PC-9 (cell line): ENCODE measurements at regions of chr15 and their contacts with region 1.

Region 1: DNA sequence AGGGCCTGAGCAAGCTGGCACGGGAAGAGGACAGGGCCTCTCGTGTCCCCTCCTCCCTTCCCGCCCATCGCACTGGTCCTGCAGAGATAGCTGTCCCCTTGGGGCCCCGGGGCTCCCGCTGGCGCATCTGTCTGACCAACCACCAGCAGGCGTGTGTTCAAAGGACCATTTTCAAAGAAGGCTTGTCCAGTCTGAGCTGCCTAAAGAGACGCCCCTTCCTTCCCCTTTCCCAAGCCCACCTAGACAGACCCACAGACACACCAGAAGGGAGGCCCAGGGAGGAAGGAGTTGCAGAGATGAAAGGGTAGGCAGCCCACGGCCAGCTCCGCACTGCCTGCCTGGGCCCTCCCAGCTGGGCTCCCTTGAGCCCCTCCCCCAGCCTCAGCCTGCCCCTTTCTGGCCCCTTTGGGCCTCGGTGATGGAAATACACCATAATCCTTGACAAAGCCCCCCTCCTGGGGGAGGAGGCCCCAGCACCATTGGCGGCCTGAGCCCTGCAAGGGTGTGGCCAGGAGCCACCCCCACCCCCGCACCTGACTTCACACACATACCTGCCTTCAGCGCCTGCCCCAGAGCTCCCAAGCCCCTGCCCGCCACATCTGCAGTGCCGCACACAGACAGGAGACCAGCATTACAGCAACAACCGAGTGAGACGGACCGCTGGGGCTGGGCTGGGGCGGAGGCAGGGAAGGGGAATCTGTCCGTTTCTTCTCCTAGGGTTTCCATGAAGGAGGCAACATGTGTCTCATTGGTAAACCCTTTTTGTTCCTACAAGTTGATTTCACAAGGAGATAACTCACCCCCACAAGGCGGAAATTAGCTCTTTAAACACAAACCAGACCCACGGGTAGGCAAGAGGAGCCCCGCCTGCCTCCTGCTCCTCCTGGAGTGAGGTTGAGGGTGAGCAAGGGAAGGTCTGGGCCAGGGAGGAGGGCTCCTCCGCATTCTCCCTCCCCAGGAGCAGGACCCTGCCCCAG is at the start of gene STRA6:
- DNase-seq: peak; percentile 86 to 91
- H3K4me3 ChIP-seq: peak within 1 kb of the TSS; percentile 73
- H3K27ac ChIP-seq: peak within 1 kb of the TSS; percentile 95
- H3K4me1 ChIP-seq: peaks cover 79% of the 10 kb centered on the region
- H3K27me3 ChIP-seq: no peaks in the 10 kb centered on the region
- CTCF ChIP-seq: peak; percentile 39; the same call in 1 of the 2 replicates
- total RNA-seq, gene STRA6: 64.9 and 83.6 TPM in 2 replicates

Region 2: DNA sequence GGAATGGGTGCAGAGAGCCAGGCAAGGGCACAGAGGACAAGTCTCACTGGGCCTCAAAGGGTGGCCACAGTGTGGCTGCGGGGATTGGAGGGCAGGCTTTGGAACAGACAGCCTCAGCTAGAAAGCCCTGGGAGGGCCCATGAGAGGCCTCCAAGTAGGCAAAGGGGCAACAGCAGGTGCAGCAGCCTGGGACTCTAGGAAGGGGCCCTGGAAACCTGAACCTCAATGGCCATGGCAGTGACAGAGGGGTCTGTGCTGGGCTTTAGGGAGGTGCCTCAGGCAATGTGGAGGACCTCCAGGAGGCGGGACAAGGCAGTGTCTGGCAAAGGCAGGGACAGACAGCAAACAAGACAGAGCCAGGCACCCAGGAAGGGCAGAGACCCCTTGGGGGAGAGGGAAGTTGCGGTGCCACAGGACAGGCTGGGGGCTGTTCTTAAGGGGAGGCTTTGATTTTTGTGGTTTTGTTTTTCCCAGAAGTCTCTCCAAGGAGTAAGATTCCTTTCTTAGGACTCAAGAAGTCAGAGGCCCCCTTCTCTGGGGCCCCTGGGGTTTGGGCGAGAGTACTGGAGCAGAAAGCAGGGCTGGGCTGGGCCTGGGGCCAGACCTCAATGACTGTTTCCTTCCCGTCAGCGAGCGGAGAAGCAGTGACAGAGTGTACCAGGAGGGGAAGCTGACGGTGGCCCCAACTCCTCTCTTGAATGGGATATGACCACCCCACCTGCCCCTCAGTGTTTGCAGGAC is 220.3 kb before region 1 on chr15:
- CTCF ChIA-PET with region 1: no interaction called
- POLR2A ChIA-PET with region 1: no interaction called
- intact Hi-C with region 1: loop called (anchors 10 kb)
- DNase-seq: peak; percentile 52 to 79
- H3K4me3 ChIP-seq: no peak overlapping the region; the same call in 1 of the 2 replicates
- H3K27ac ChIP-seq: peak overlapping the region; percentile 49
- H3K4me1 ChIP-seq: peaks cover 35% of the 10 kb centered on the region
- H3K27me3 ChIP-seq: no peaks in the 10 kb centered on the region
- CTCF ChIP-seq: no peak

Region 3: GRCh38 chr15:74179341-74179841 is 23.3 kb before region 1 on chr15:
- CTCF ChIA-PET with region 1: interaction called, 5 read pairs
- POLR2A ChIA-PET with region 1: interaction called, 9 read pairs
- intact Hi-C with region 1: loop called (anchors 1 kb)
- DNase-seq: peak; percentile 94 to 95
- H3K4me3 ChIP-seq: no peak overlapping the region
- H3K27ac ChIP-seq: peak overlapping the region; percentile 75
- H3K4me1 ChIP-seq: peaks cover 43% of the 10 kb centered on the region
- H3K27me3 ChIP-seq: no peaks in the 10 kb centered on the region
- CTCF ChIP-seq: no peak

Region 4: GRCh38 chr15:74228723-74229081 is 26.0 kb after region 1 on chr15:
- CTCF ChIA-PET with region 1: interaction called, 10 read pairs
- POLR2A ChIA-PET with region 1: no interaction called
- intact Hi-C with region 1: no loop called
- DNase-seq: no peak
- H3K4me3 ChIP-seq: no peak overlapping the region
- H3K27ac ChIP-seq: no peak overlapping the region
- H3K4me1 ChIP-seq: peaks cover 8% of the 10 kb centered on the region; the same call in 1 of the 2 replicates
- H3K27me3 ChIP-seq: no peaks in the 10 kb centered on the region
- CTCF ChIP-seq: no peak

Region 5: GRCh38 chr15:74264081-74264501 is 61.4 kb after region 1 on chr15:
- CTCF ChIA-PET with region 1: interaction called, 12 read pairs
- POLR2A ChIA-PET with region 1: no interaction called
- intact Hi-C with region 1: no loop called
- DNase-seq: no peak
- H3K4me3 ChIP-seq: no peak overlapping the region
- H3K27ac ChIP-seq: no peak overlapping the region
- H3K4me1 ChIP-seq: no peaks in the 10 kb centered on the region
- H3K27me3 ChIP-seq: peaks cover 40% of the 10 kb centered on the region
- CTCF ChIP-seq: no peak

Region 6: GRCh38 chr15:74396445-74397238 is 193.9 kb after region 1 on chr15:
- CTCF ChIA-PET with region 1: no interaction called
- POLR2A ChIA-PET with region 1: no interaction called
- intact Hi-C with region 1: no loop called
- DNase-seq: peak; percentile 84 to 95
- H3K4me3 ChIP-seq: no peak overlapping the region
- H3K27ac ChIP-seq: peak overlapping the region; percentile 98
- H3K4me1 ChIP-seq: peaks cover 72% of the 10 kb centered on the region
- H3K27me3 ChIP-seq: no peaks in the 10 kb centered on the region
- CTCF ChIP-seq: no peak